Activated CD4-positive, alpha-beta T cell treated with anti-CD3 and anti-CD28 coated beads for 36 hours (primary cell): ENCODE measurements at regions of chr1 and their contacts with region 1.

Region 1: DNA sequence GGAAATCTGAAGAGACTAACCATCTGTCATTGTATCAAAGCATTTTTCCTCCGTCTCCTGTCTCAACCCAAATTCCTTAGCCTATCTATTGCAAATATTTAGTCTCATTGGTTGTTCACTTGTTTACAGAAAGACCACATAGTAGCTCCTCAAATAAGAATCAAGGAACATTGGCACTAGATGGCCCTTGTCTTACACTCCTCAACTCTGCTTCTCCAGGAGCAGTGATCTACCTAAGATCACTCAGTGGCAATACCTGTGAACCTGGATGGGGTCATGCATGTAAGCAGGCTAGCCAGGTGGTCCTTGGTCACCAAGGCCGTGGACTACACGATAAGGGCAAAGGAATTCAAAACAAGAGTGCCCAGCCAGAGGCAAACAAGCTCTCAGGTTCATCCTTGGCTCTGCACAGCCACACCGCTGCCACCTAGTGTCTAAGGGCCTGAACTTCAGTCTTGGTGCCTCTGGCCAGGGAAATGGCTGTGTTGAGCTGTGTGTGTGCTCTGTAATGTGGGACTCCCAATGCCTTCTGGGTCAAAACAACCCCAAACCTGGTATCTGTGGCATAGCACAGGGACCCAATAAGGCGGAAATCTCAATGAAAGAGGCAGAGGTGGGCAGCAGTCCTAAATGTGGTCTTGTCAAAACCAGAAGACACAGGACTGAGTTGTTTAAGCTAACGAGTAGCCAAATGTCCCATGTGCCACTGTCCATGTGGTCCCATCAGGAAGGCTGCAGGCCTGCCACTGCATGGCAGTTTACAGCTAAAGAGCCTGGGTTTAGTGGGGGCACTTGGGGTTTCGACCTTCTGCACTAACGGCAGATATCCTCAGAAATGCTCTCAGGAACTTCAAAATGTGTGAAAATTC is 54.5 kb downstream of the GPR161 start:
- DNase-seq: peak; percentile 84
- ATAC-seq: peak; percentile 92
- H3K4me3 Mint-ChIP-seq: no peak overlapping the region
- H3K27ac Mint-ChIP-seq: peak overlapping the region; percentile 45
- H3K4me1 Mint-ChIP-seq: no peaks in the 10 kb centered on the region
- H3K27me3 Mint-ChIP-seq: no peaks in the 10 kb centered on the region

Region 2: GRCh38 chr1:167936068-167936929 is 145.9 kb before region 1 on chr1 and contains the start of gene DCAF6:
- CTCF ChIA-PET with region 1: interaction called, 9 read pairs
- POLR2A ChIA-PET with region 1: no interaction called
- intact Hi-C with region 1: loop called in 1 of 2 experiments (anchors 5 kb)
- DNase-seq: peak; percentile 97
- ATAC-seq: peak; percentile 84
- H3K4me3 Mint-ChIP-seq: peak within 1 kb of the TSS; percentile 89
- H3K27ac Mint-ChIP-seq: peak within 1 kb of the TSS; percentile 97
- H3K4me1 Mint-ChIP-seq: peaks cover 34% of the 10 kb centered on the region
- H3K27me3 Mint-ChIP-seq: no peaks in the 10 kb centered on the region
- total RNA-seq, gene DCAF6: 25.6 to 28.8 TPM

Region 3: DNA sequence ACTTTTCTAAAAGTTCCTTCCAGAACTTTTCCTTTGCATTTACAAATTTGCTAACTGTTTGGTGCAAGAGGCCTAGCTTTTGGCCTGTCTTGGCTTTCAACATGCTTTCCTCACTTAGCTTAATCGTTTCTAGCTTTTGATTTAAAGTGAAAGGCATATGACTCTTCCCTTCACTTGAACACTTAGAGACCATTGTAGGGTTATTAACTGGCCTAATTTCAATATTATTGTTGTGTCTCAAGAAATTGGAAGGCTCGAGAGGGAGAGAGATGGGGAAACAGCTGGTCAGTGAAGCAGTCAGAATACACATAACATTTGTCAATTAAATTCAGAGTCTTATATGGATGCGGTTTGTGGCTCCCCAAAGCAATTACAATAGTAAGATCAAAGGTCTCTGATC is 82.4 kb before region 1 on chr1:
- CTCF ChIA-PET with region 1: no interaction called
- POLR2A ChIA-PET with region 1: no interaction called
- intact Hi-C with region 1: no loop called
- DNase-seq: no peak
- ATAC-seq: no peak
- H3K4me3 Mint-ChIP-seq: no peak overlapping the region
- H3K27ac Mint-ChIP-seq: no peak overlapping the region
- H3K4me1 Mint-ChIP-seq: no peaks in the 10 kb centered on the region
- H3K27me3 Mint-ChIP-seq: no peaks in the 10 kb centered on the region

Region 4: DNA sequence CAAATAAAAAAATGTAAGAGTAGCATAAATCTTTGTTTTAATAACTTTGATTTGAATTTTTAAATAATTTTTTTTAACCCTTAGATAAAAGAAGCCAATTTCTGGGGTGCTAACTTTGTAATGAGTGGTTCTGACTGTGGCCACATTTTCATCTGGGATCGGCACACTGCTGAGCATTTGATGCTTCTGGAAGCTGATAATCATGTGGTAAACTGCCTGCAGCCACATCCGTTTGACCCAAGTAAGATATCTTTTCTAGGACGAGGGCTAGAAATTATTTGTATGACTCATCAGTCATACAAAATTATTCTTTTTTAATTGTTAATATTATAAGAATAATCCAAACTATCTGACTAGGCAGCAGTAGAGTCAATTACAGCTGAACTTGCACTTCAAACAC is 16.7 kb before region 1 on chr1:
- CTCF ChIA-PET with region 1: interaction called, 33 read pairs
- POLR2A ChIA-PET with region 1: no interaction called
- intact Hi-C with region 1: no loop called
- DNase-seq: no peak
- ATAC-seq: no peak
- H3K4me3 Mint-ChIP-seq: no peak overlapping the region
- H3K27ac Mint-ChIP-seq: no peak overlapping the region
- H3K4me1 Mint-ChIP-seq: no peaks in the 10 kb centered on the region
- H3K27me3 Mint-ChIP-seq: no peaks in the 10 kb centered on the region

Region 5: GRCh38 chr1:168136709-168137514 is 54.7 kb after region 1 on chr1 and contains the start of gene GPR161:
- CTCF ChIA-PET with region 1: interaction called, 8 read pairs
- POLR2A ChIA-PET with region 1: no interaction called
- intact Hi-C with region 1: loop called in 1 of 2 experiments (anchors 5 kb)
- DNase-seq: peak; percentile 40
- ATAC-seq: no peak
- H3K4me3 Mint-ChIP-seq: peak within 1 kb of the TSS; percentile 73
- H3K27ac Mint-ChIP-seq: peak within 1 kb of the TSS; percentile 61
- H3K4me1 Mint-ChIP-seq: peaks cover 40% of the 10 kb centered on the region
- H3K27me3 Mint-ChIP-seq: peaks cover 37% of the 10 kb centered on the region
- total RNA-seq, gene GPR161: 0.42 to 0.59 TPM

Region 6: DNA sequence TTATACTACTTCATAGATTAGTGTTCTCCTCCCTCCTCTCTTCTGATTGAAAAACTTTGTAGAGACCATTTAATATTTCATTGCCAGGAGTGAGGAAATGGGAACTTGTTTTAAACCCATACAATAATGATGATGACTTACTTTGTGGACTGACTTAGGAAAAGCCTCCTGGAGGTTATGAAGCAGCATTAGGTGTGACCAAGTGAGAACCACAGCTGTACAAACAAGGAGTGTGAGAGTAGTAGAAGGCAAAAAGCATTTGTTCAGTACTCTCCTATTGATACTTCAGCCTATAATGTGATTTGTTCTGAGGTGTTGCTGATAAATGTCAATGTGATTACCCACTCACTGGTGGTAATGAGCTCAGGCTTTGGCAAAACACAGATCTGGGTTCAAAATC is 104.9 kb after region 1 on chr1:
- CTCF ChIA-PET with region 1: no interaction called
- POLR2A ChIA-PET with region 1: no interaction called
- intact Hi-C with region 1: no loop called
- DNase-seq: no peak
- ATAC-seq: no peak
- H3K4me3 Mint-ChIP-seq: no peak overlapping the region
- H3K27ac Mint-ChIP-seq: no peak overlapping the region
- H3K4me1 Mint-ChIP-seq: peaks cover 7% of the 10 kb centered on the region
- H3K27me3 Mint-ChIP-seq: no peaks in the 10 kb centered on the region

Region 7: DNA sequence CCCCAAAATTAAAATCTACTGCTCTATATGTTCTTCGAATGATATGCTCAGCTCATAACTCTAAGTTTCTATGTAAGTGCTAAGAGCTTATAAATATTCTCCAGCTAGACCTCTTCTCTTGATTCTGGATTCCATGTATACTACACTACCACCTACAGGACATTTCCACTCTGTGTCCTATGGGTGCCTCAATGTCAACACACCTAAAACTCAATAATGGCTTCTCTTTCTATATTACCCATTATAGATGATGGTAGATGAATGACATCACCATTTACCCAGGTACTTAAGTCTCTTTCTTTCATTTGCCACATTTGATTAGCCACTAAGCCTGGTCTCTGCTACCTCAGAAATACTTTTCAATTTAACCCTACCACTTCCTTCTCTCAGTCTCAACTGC is 239.7 kb after region 1 on chr1:
- CTCF ChIA-PET with region 1: no interaction called
- POLR2A ChIA-PET with region 1: no interaction called
- intact Hi-C with region 1: loop called in 1 of 2 experiments (anchors 2 kb)
- DNase-seq: no peak
- ATAC-seq: peak; percentile 78
- H3K4me3 Mint-ChIP-seq: no peak overlapping the region
- H3K27ac Mint-ChIP-seq: no peak overlapping the region
- H3K4me1 Mint-ChIP-seq: peaks cover 13% of the 10 kb centered on the region
- H3K27me3 Mint-ChIP-seq: no peaks in the 10 kb centered on the region